ENCODE measurements at regions of chr2 and their contacts with region 1.

Region 1: GRCh38 chr2:103887625-103888024 is 966.3 kb upstream of the POU3F3 start:
- DNase-seq: no peak
- H3K4me3 ChIP-seq: no peak overlapping the region
- H3K27ac ChIP-seq: no peak overlapping the region
- H3K4me1 ChIP-seq: no peaks in the 10 kb centered on the region
- H3K27me3 ChIP-seq: no peaks in the 10 kb centered on the region
- CTCF ChIP-seq: no peak

Region 2: GRCh38 chr2:103860016-103860415 is 27.6 kb before region 1 on chr2:
- intact Hi-C with region 1: loop called (anchors 1 kb)
- DNase-seq: no peak
- H3K4me3 ChIP-seq: no peak overlapping the region
- H3K27ac ChIP-seq: no peak overlapping the region
- H3K4me1 ChIP-seq: no peaks in the 10 kb centered on the region
- H3K27me3 ChIP-seq: no peaks in the 10 kb centered on the region
- CTCF ChIP-seq: no peak

Region 3: DNA sequence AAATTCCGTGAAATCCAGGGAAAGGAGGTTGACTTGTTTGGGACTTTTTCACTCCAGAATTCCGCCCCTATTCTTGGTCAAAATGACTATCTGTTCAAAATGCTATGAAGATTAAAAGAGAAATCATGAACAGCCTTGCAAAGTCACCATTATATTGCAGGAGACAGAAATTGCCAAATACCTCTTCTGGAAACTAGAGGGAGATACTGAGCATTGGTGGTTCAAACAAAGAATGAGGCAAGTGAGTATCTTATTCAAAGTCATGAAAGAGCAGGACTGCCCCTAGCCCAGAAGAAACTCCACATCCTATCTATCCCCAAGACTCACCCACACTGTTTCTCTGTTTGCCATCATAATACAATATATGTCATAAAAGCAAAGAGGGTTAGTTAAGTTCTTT is 104.0 kb after region 1 on chr2:
- intact Hi-C with region 1: no loop called
- DNase-seq: no peak
- H3K4me3 ChIP-seq: no peak overlapping the region
- H3K27ac ChIP-seq: no peak overlapping the region
- H3K4me1 ChIP-seq: no peaks in the 10 kb centered on the region
- H3K27me3 ChIP-seq: no peaks in the 10 kb centered on the region
- CTCF ChIP-seq: no peak

Measured in tibial artery (tissue), 4 donors.